Right cardiac atrium (tissue), 5 donors: ENCODE measurements at regions of chr18 and their contacts with region 1.

Region 1: GRCh38 chr18:3245853-3246634 is 1.6 kb upstream of the MYL12A start:
- DNase-seq: peak; percentile 92 to 96 (median 96)
- ATAC-seq: peak; percentile 80
- H3K4me3 ChIP-seq: peak overlapping the region; percentile 86
- H3K27ac ChIP-seq: peak overlapping the region; percentile 97
- H3K4me1 ChIP-seq: peaks cover 6% of the 10 kb centered on the region
- H3K27me3 ChIP-seq: no peaks in the 10 kb centered on the region

Region 2: GRCh38 chr18:2932247-2933181 is 313.5 kb before region 1 on chr18:
- intact Hi-C with region 1: loop called in 3 of 4 experiments (anchors 5 to 10 kb)
- DNase-seq: no peak
- ATAC-seq: peak; percentile 55 to 58
- H3K4me3 ChIP-seq: no peak overlapping the region
- H3K27ac ChIP-seq: no peak overlapping the region
- H3K4me1 ChIP-seq: no peaks in the 10 kb centered on the region
- H3K27me3 ChIP-seq: no peaks in the 10 kb centered on the region

Region 3: GRCh38 chr18:2948038-2948437 is 298.0 kb before region 1 on chr18:
- intact Hi-C with region 1: no loop called
- DNase-seq: no peak
- ATAC-seq: peak; percentile 75 to 90
- H3K4me3 ChIP-seq: no peak overlapping the region
- H3K27ac ChIP-seq: no peak overlapping the region
- H3K4me1 ChIP-seq: no peaks in the 10 kb centered on the region
- H3K27me3 ChIP-seq: no peaks in the 10 kb centered on the region

Region 4: DNA sequence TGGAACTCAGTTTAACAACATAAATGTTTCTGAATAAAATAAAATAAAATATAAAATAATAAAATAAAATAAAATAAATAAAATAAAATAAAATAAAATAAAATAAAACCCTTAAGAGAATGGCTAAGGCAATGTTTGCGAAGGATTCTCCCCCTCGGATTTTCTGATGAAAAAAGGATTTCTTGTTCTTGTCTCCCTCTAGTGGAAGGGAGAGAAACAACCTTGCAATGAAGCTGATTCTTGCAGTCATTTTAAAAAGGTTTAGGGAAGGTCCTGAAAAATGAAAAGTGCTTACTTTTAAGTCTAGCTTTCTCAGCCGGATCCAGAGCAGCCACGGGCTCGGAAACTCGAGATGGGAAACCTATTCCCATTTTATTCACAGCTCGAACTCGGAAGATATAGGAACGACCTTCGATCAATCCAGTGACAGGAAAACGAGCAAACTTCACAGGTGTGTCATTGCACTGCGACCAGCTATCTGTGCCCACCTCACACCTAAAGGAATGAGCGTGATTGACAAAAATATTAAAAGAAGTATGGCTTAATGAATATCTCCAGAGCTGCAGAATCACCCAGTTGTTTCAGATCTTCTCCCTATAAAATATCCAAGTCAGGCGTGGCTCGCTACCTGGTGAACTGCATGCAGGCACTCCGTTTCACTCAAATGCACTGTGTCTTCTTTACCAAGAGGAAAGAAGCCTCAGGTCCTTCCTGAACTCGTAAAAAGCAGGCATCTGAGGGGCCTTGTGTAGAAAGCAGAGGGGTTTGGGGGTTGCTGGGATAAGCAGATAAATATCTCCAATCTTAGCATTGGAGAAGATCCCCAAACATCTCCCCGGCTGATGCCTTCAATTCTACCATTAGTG is 94.4 kb before region 1 on chr18:
- intact Hi-C with region 1: loop called in 3 of 4 experiments (anchors 5 to 10 kb)
- DNase-seq: no peak
- ATAC-seq: no peak
- H3K4me3 ChIP-seq: no peak overlapping the region
- H3K27ac ChIP-seq: no peak overlapping the region
- H3K4me1 ChIP-seq: no peaks in the 10 kb centered on the region
- H3K27me3 ChIP-seq: no peaks in the 10 kb centered on the region

Region 5: GRCh38 chr18:3177902-3178687 is 67.9 kb before region 1 on chr18:
- intact Hi-C with region 1: loop called in 1 of 4 experiments (anchors 10 kb)
- DNase-seq: peak; percentile 51 to 80 (median 62)
- ATAC-seq: peak; percentile 51 to 70
- H3K4me3 ChIP-seq: no peak overlapping the region
- H3K27ac ChIP-seq: no peak overlapping the region
- H3K4me1 ChIP-seq: peaks cover 3% of the 10 kb centered on the region
- H3K27me3 ChIP-seq: no peaks in the 10 kb centered on the region

Region 6: GRCh38 chr18:3192286-3192685 is 53.8 kb before region 1 on chr18:
- intact Hi-C with region 1: loop called in 1 of 4 experiments (anchors 10 kb)
- DNase-seq: no peak
- ATAC-seq: no peak
- H3K4me3 ChIP-seq: no peak overlapping the region
- H3K27ac ChIP-seq: no peak overlapping the region
- H3K4me1 ChIP-seq: peaks cover 3% of the 10 kb centered on the region
- H3K27me3 ChIP-seq: no peaks in the 10 kb centered on the region

Region 7: GRCh38 chr18:3321133-3321812 is 75.2 kb after region 1 on chr18:
- intact Hi-C with region 1: no loop called
- DNase-seq: no peak
- ATAC-seq: no peak
- H3K4me3 ChIP-seq: no peak overlapping the region
- H3K27ac ChIP-seq: no peak overlapping the region
- H3K4me1 ChIP-seq: no peaks in the 10 kb centered on the region
- H3K27me3 ChIP-seq: no peaks in the 10 kb centered on the region